Activated naive CD4-positive, alpha-beta T cell treated with anti-CD3 and anti-CD28 coated beads for 36 hours (primary cell): ENCODE measurements at regions of chr12 and their contacts with region 1.

Region 1: DNA sequence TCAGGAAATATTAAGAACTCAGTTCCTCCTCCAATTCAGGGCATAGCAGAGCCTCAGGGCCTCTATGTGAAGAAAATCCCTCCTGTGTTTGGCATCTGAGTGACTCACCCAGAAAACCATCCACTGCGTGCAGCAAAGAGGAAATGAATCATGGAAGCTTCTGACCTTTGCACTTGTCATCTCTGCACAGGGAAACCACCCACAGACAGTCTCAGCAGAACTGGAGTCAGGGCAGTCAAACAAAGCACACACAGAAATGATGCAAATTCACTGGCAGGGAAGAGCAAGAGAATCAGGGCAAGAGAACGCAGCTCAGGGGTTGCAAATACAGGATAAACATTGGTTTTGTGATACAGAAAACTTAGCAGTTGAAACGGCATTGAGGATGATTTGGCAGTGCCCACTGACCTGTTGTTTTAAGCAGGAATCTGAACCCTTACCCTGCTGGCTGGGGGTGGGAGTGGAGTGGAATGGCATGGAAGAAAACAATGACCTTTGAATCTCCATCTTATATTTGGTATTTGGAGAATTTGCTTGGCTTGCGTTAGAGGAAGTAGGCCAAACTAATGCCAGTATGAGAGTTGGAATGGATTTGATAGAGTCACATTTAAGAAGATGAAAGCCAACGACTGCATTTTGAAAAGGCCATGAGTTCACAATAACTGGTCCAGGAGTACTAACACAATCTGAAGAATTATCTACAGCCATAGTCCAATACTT is 53.5 kb downstream of the PHLDA1 start:
- DNase-seq: peak; percentile 90
- H3K4me3 Mint-ChIP-seq: peak overlapping the region; percentile 57
- H3K27ac Mint-ChIP-seq: peak overlapping the region; percentile 99
- H3K4me1 Mint-ChIP-seq: peaks cover 60% of the 10 kb centered on the region
- H3K27me3 Mint-ChIP-seq: no peaks in the 10 kb centered on the region

Region 2: DNA sequence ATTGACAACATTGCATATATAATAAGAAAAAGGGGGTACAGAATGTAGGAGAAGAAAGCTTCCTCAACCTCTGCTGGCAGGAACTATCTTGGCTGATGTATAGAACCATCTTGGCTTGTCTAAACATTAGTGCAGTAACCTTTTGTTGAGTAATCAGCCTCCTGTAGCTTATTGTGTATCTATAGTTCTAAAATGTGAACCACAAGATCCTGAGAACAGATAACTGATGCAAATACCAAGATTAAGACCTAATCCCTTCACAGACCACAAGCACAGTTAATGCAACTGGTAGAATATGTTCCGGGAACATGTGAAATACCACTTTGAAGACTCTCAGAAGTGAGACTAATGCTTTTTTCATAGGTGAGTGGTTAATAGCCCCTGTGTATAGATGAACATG is 717.8 kb before region 1 on chr12:
- CTCF ChIA-PET with region 1: no interaction called
- intact Hi-C with region 1: no loop called
- DNase-seq: no peak
- H3K4me3 Mint-ChIP-seq: no peak overlapping the region
- H3K27ac Mint-ChIP-seq: no peak overlapping the region
- H3K4me1 Mint-ChIP-seq: peaks cover 9% of the 10 kb centered on the region
- H3K27me3 Mint-ChIP-seq: no peaks in the 10 kb centered on the region

Region 3: GRCh38 chr12:75641031-75641780 is 336.9 kb before region 1 on chr12:
- CTCF ChIA-PET with region 1: no interaction called
- intact Hi-C with region 1: loop called (anchors 5 kb)
- DNase-seq: peak; percentile 26
- H3K4me3 Mint-ChIP-seq: no peak overlapping the region
- H3K27ac Mint-ChIP-seq: no peak overlapping the region
- H3K4me1 Mint-ChIP-seq: peaks cover 21% of the 10 kb centered on the region
- H3K27me3 Mint-ChIP-seq: peaks cover 12% of the 10 kb centered on the region

Region 4: GRCh38 chr12:75913502-75914351 is 64.4 kb before region 1 on chr12:
- CTCF ChIA-PET with region 1: no interaction called
- intact Hi-C with region 1: loop called (anchors 1 kb)
- DNase-seq: peak; percentile 49
- H3K4me3 Mint-ChIP-seq: no peak overlapping the region
- H3K27ac Mint-ChIP-seq: no peak overlapping the region
- H3K4me1 Mint-ChIP-seq: peaks cover 21% of the 10 kb centered on the region
- H3K27me3 Mint-ChIP-seq: no peaks in the 10 kb centered on the region

Region 5: DNA sequence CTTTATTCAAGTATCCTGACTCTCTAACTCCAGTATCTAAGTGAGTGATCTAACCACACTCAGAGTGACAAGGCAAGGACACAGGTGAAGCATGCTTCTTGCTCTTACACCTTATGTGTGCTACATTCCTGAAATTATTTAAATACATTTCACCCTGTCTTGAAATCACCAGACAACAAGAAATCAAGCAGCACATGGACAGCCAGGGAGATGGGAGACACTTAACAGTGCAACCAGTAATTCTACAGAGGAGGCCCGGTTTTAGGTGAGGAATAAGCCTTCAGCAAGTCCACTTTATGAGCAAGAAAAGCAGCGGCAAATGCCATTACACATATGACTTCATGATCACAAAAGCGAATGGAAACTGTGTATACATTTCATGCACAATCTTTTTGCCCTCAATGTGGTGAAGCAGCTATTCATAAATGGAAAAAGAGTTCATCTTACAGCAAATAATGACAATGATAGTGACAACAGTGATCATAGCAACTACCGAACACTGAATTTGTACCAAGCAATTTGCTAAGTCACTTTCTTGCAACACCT is 16.1 kb after region 1 on chr12:
- CTCF ChIA-PET with region 1: no interaction called
- intact Hi-C with region 1: loop called (anchors 1 kb)
- DNase-seq: no peak
- H3K4me3 Mint-ChIP-seq: no peak overlapping the region
- H3K27ac Mint-ChIP-seq: no peak overlapping the region
- H3K4me1 Mint-ChIP-seq: peaks cover 17% of the 10 kb centered on the region
- H3K27me3 Mint-ChIP-seq: no peaks in the 10 kb centered on the region

Region 6: GRCh38 chr12:76348079-76348901 is 370.2 kb after region 1 on chr12 and contains the start of gene BBS10:
- CTCF ChIA-PET with region 1: no interaction called
- intact Hi-C with region 1: loop called (anchors 1 kb)
- DNase-seq: peak; percentile 92
- H3K4me3 Mint-ChIP-seq: peak within 1 kb of the TSS; percentile 90
- H3K27ac Mint-ChIP-seq: peak within 1 kb of the TSS; percentile 86
- H3K4me1 Mint-ChIP-seq: peaks cover 22% of the 10 kb centered on the region
- H3K27me3 Mint-ChIP-seq: no peaks in the 10 kb centered on the region
- total RNA-seq, gene BBS10: 3.3 TPM